ENCODE measurements at regions of chr9 and their contacts with region 1.

Region 1: GRCh38 chr9:69731348-69731747 is 28.5 kb downstream of the PTAR1 start:
- DNase-seq: no peak
- ATAC-seq: no peak
- H3K4me3 ChIP-seq: no peak overlapping the region
- H3K27ac ChIP-seq: no peak overlapping the region
- H3K4me1 ChIP-seq: no peaks in the 10 kb centered on the region
- H3K27me3 ChIP-seq: no peaks in the 10 kb centered on the region
- CTCF ChIP-seq: no peak

Region 2: GRCh38 chr9:68802525-68803015 is 928.8 kb before region 1 on chr9:
- intact Hi-C with region 1: no loop called
- DNase-seq: no peak
- ATAC-seq: no peak
- H3K4me3 ChIP-seq: no peak overlapping the region
- H3K27ac ChIP-seq: no peak overlapping the region
- H3K4me1 ChIP-seq: peaks cover 3% of the 10 kb centered on the region in 2 donors
- H3K27me3 ChIP-seq: no peaks in the 10 kb centered on the region
- CTCF ChIP-seq: no peak

Region 3: DNA sequence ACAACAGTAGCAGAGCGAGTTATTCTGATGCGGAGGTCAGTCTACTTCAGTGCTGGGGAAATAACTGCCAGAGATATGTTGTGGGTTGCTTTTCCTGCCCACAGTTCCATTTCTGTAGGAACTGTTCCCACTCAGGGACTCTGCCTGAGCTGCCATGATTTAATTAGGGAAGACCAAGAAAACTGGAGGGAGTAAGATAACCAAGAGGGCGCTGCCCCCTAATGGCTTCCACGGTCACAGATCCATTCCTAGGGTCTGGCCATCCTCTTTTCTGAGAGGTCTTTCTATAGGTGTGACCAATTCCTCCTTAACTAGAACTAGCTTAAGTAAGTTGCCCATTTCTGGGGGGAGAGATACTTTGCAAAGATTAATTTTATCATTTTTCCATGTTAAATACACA is 185.1 kb before region 1 on chr9:
- intact Hi-C with region 1: no loop called
- DNase-seq: no peak
- ATAC-seq: peak; percentile 50
- H3K4me3 ChIP-seq: no peak overlapping the region
- H3K27ac ChIP-seq: no peak overlapping the region
- H3K4me1 ChIP-seq: no peaks in the 10 kb centered on the region
- H3K27me3 ChIP-seq: no peaks in the 10 kb centered on the region
- CTCF ChIP-seq: no peak

Region 4: DNA sequence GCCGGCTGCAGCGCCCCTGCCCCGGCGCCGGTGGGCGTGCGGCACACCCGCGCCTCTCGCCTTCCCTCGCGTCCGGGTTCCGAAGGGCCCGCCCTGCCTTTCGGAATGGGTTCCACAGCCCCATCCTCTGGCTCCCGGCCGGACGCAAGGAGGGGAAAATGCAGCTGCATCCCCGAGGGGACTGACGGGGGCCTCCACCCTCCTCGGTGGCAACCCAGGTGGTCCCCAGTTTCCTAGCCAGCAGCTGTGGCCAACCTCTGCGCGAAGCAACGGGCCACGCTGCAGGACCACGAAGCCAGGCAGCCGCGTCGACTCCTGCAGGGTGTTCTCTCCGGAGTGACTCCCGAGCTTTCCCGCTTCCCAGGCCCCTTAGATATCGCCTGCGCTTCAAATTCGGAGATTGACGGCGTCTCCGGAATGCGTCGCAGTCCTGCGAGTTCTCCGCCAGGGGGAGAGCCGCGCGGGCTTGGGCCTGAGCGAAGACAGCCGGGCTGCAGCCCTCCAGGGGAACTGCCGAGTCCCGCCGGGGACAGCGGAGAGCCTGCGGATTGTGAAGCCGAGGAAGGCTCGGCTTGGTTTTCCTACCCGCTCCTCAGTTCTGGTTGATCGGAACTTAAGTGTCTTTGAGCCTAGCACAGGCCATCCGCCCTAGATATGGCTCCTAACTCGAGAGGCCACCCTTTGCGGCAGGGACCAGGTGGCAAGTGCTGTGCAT is 58.6 kb before region 1 on chr9:
- intact Hi-C with region 1: loop called in 1 of 2 experiments (anchors 10 kb)
- DNase-seq: peak; percentile 83 to 94 (median 90)
- ATAC-seq: peak; percentile 90
- H3K4me3 ChIP-seq: peak overlapping the region; percentile 54 to 81
- H3K27ac ChIP-seq: peak overlapping the region; percentile 35 to 74
- H3K4me1 ChIP-seq: peaks cover 0 to 22% of the 10 kb centered on the region in 2 donors
- H3K27me3 ChIP-seq: peaks cover 0 to 50% of the 10 kb centered on the region in 2 donors
- CTCF ChIP-seq: peak; percentile 79 to 84

Region 5: GRCh38 chr9:69877854-69878514 is 146.6 kb after region 1 on chr9:
- intact Hi-C with region 1: no loop called
- DNase-seq: peak in 2 of 4 donors; percentile 19 to 36
- ATAC-seq: peak; percentile 90
- H3K4me3 ChIP-seq: no peak overlapping the region
- H3K27ac ChIP-seq: no peak overlapping the region
- H3K4me1 ChIP-seq: no peaks in the 10 kb centered on the region
- H3K27me3 ChIP-seq: no peaks in the 10 kb centered on the region
- CTCF ChIP-seq: peak in 1 of 2 donors; percentile 45

Measured in left lung (tissue), 14 donors.